Upper lobe of right lung (tissue), 1 donor: ENCODE measurements at regions of chr22 and their contacts with region 1.

Region 1: GRCh38 chr22:30386960-30387827 is at the start of gene RNF215:
- DNase-seq: peak; percentile 93
- ATAC-seq: peak; percentile 96
- H3K4me3 ChIP-seq: peak within 1 kb of the TSS; percentile 54
- H3K27ac ChIP-seq: no peak within 1 kb of the TSS
- H3K4me1 ChIP-seq: peaks cover 5% of the 10 kb centered on the region
- H3K27me3 ChIP-seq: no peaks in the 10 kb centered on the region
- CTCF ChIP-seq: peak; percentile 83
- total RNA-seq, gene RNF215: 16.5 TPM

Region 2: DNA sequence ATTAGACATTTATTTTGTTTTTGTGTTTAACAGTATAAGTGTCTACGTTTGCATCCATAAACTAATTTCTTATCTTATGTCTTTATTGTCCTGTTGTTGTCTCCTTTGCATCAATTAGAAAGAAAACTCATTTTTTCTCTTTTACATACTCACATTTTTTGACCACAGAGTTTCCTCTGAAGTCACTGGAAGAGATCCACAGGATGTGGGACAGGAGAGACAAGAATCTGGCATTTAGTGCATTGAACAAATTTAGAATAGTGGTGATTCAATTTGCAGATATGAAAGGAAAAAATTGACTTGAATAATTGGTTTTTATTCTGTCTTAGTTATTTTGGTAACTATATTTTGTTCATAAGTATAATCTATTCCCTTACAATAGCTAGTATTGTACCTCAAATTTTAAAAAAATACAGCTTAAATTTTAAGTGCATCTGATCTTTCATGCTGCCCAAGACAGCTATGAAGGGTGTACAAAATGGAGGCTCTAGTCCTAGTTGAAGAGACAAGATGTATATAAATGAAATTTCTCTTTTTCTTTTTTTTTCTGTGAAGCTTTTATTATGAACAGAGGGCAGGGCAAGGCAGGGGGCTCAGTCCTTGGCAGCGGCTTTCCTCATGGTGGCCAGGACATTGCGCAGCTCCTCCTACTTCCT is 282.6 kb before region 1 on chr22:
- intact Hi-C with region 1: loop called (anchors 10 kb)
- DNase-seq: no peak
- ATAC-seq: no peak
- H3K4me3 ChIP-seq: no peak overlapping the region
- H3K27ac ChIP-seq: no peak overlapping the region
- H3K4me1 ChIP-seq: no peaks in the 10 kb centered on the region
- H3K27me3 ChIP-seq: no peaks in the 10 kb centered on the region
- CTCF ChIP-seq: no peak

Region 3: DNA sequence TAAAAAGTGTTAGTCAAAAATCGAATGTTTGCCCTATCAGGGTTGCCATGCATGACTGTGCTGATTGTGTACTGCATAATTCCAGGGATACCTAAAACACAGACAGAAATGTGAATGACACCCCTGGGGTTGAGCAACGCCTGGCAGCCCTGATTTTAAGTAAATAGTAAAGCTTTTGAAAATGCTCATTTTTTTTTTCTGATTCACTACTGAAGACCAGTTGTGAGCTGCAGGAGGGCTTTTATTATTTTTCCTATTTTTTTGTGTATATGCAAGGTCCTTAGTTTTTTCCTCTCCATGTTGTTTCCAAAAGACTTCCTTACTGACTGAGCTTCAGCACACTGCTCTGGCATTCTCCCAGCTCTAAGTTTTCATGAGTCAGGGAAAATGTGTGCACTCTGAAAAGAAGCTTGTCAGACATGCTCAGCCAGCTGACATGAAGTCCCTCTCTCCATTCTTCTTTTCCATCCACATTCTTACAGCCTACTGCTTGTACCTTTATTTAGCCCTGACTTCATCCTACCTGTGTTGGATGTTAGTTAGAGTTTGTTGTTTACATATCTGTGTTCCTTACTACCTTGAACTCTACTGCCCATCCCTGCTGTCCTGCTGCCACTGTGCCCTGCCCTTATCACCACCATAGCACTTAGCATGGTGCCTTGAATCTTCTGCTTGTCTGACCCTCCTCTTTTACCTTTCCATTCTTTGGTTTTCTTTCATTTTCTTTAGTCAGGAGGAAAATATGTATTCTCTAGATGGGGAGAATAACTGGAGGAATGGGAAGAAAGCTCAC is 227.4 kb before region 1 on chr22:
- intact Hi-C with region 1: no loop called
- DNase-seq: no peak
- ATAC-seq: peak; percentile 60
- H3K4me3 ChIP-seq: no peak overlapping the region
- H3K27ac ChIP-seq: no peak overlapping the region
- H3K4me1 ChIP-seq: no peaks in the 10 kb centered on the region
- H3K27me3 ChIP-seq: peaks cover 3% of the 10 kb centered on the region
- CTCF ChIP-seq: no peak

Region 4: DNA sequence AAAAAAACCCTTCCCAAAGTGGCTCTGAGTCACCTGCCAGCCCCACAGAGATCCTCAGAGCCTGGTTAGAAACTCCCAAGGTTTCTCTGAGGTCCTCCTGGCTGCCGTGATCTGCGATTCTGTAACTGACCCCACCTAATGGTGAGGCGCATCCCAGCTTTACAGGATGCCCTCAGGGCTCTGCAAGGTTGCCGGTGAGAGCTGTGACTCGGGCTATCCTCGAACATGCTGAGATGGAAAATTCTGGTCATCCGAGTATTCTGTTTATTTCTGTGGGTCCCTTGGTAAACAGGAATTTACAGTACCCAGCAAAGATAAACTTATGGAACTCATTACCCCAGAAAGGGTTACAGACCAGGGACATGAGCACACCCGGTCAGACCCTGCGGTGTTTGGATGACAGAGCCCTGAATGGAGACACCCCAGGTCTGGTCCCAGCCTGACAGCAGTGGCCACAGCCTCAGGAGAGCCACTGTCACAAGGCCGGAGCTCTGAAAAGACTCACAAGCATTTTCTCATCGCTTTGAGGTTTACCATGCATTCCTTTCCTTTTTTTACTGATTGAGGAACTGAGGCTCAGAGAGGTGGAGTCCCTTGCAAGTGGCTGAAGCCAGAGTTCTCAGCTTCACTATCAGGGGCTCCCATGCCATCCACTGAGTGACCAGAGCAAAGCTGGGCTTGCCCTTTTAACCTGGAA is 162.9 kb before region 1 on chr22:
- intact Hi-C with region 1: no loop called
- DNase-seq: no peak
- ATAC-seq: no peak
- H3K4me3 ChIP-seq: no peak overlapping the region
- H3K27ac ChIP-seq: no peak overlapping the region
- H3K4me1 ChIP-seq: no peaks in the 10 kb centered on the region
- H3K27me3 ChIP-seq: no peaks in the 10 kb centered on the region
- CTCF ChIP-seq: no peak

Region 5: DNA sequence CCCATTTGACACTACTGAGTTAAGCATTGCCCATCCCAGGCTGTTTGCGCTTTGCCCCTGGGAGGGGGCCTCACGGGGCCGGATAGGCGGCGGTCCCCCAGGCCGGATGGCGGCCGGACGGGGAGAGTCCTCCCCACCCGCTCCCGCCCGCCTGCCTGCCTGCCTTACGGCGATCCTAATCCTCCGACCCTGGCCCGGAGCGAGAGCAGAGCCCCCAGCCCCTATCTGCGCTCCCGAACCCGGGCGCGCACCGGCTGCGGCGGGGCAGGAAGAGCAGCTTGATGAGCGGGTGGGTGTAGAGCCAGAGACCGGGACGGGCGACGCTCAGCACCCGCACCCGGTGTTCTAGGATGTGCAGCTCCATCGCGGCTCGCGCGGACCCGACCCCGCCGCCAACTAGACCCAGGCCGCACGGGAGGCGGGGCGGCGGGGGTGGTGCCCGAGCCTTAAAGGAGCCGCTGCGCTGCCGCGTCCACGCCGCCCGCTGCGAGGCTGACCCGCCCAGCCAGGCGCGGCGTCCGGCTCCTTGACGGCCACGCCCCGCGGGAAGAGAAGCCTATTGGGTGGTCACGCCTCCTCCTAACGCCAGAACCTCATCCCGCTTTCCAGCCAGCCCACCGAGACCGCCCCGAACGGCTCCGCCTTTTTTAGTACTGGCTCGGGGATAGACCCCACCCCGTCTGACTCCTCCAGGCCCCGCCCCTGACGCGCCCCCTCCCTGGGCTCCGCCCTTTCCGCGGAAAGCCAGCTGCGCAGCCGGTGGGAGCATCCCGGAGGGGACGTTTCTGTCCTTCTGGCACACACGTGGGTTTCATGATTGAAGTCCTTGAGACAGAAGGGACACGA is 97.8 kb before region 1 on chr22 and contains the start of gene CASTOR1:
- intact Hi-C with region 1: loop called (anchors 5 kb)
- DNase-seq: peak; percentile 99
- ATAC-seq: peak; percentile 87
- H3K4me3 ChIP-seq: peak within 1 kb of the TSS; percentile 97
- H3K27ac ChIP-seq: peak within 1 kb of the TSS; percentile 92
- H3K4me1 ChIP-seq: peaks cover 36% of the 10 kb centered on the region
- H3K27me3 ChIP-seq: no peaks in the 10 kb centered on the region
- CTCF ChIP-seq: no peak
- total RNA-seq, gene CASTOR1: 15.9 TPM

Region 6: DNA sequence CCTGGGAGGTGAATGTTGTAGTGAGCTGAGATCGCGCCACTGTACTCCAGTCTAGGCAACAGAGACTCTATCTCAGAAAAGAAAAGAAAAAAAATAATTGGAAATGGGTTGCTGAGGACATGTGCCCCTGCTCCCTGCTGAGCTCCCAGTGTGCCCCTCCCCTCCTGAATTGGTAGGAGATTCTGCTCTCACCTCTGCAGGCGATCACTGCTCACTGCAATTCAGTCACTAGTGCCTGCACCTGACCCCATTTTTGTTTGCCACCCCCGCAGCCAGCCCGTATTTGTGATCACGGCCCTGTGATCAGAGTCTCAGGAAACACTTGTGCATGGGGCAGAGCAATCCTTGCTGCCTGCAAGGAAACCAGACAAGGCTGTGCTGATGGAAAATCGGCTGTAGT is 100.9 kb after region 1 on chr22:
- intact Hi-C with region 1: loop called (anchors 2 kb)
- DNase-seq: no peak
- ATAC-seq: no peak
- H3K4me3 ChIP-seq: no peak overlapping the region
- H3K27ac ChIP-seq: no peak overlapping the region
- H3K4me1 ChIP-seq: no peaks in the 10 kb centered on the region
- H3K27me3 ChIP-seq: no peaks in the 10 kb centered on the region
- CTCF ChIP-seq: no peak